ENCODE measurements at regions of chr5 and their contacts with region 1.

Region 1: GRCh38 chr5:134555890-134556311 is 30.4 kb downstream of the JADE2 start:
- DNase-seq: peak; percentile 89
- H3K4me3 Mint-ChIP-seq: peak overlapping the region; percentile 80
- H3K27ac Mint-ChIP-seq: peak overlapping the region; percentile 97
- H3K4me1 Mint-ChIP-seq: peaks cover 33% of the 10 kb centered on the region
- H3K27me3 Mint-ChIP-seq: no peaks in the 10 kb centered on the region

Region 2: GRCh38 chr5:134493461-134494055 is 62.3 kb before region 1 on chr5:
- intact Hi-C with region 1: no loop called
- DNase-seq: no peak
- H3K4me3 Mint-ChIP-seq: no peak overlapping the region
- H3K27ac Mint-ChIP-seq: peak overlapping the region; percentile 1
- H3K4me1 Mint-ChIP-seq: peaks cover 8% of the 10 kb centered on the region
- H3K27me3 Mint-ChIP-seq: no peaks in the 10 kb centered on the region

Region 3: DNA sequence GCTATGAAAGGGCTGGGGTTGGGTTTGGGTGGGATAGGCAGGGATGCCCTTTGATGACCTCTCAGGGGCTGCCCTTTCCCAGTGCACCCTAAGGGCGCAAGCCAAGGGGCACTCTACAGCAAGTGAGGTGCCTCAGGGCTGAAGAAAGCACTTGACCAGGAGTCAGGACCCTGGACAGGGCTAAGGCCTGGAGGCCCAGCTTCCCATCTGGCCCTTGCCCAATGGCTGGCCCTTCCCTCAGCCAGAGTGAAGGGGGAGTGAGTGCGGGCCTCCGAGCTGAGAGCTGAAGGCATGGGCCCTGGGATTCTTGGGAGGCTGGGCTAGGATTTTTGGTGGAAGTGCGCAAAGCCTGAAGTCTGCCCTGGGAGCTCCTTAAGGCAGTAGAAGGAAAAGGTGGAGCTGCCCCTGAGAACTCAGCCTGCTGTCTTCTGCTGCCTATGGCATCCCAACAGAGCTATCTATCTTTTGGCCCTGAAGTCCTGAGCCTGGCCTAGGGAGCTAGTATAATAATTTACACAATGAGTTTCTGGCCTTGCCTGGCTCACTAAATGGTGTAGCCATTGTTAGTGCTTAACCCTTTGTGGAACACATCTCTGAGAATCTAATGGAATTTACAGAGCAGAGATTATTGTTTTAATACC is 14.0 kb before region 1 on chr5:
- intact Hi-C with region 1: loop called (anchors 1 kb)
- DNase-seq: peak; percentile 65
- H3K4me3 Mint-ChIP-seq: no peak overlapping the region
- H3K27ac Mint-ChIP-seq: no peak overlapping the region
- H3K4me1 Mint-ChIP-seq: peaks cover 45% of the 10 kb centered on the region
- H3K27me3 Mint-ChIP-seq: no peaks in the 10 kb centered on the region

Measured in activated CD4-positive, alpha-beta T cell treated with anti-CD3 and anti-CD28 coated beads, Interleukin-2, amount 10 ng/mL, durations not matched to agents 24 days and 14 days (primary cell).